Naive thymus-derived CD4-positive, alpha-beta T cell (primary cell): ENCODE measurements at regions of chr3 and their contacts with region 1.

Region 1: DNA sequence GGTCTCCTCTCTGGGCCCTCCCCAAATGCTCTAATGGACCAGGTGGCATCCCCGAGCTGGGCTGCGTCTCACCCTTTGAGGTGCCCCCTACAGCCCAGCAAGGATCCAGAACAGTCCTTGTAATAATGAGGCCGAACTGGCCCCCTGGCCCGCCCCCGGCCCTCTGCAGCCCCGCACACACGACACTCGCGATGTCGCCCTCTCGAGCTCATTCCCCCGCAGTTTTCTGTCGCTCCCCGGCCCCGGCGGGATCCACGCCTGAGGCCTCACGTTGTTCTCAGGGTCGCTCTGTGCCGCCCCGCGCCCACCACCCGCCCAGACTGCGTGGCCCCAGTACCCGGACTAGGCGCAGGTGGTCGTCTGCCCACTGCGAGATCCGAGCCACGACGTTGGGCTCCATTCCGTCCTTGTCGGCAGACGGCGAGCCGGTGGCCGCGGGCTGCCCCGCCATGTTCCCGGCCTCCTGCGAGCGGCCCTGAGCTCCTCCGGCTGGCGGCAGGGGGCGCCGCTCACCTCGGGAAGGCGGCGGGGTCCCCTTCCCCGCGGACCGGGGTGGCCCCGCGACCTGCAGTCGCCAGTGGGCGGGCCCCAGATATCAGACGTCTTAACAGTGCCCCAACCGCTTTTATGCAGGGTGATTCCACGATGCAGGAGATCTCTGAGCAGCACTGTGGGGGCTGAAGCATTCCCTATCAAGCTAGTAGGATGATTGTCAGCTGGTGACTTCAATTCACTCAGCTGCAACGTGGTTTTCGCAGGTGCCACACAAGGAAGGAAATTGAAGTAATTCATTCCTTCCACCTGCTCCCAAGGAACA is at the start of gene C3orf33:
- DNase-seq: peak; percentile 52 to 85 (median 78)
- ATAC-seq: peak; percentile 98
- H3K4me3 ChIP-seq: peak within 1 kb of the TSS; percentile 71
- H3K4me3 Mint-ChIP-seq: peak within 1 kb of the TSS; percentile 79 to 91 (median 90)
- H3K27ac ChIP-seq: peak within 1 kb of the TSS; percentile 79
- H3K27ac Mint-ChIP-seq: peak within 1 kb of the TSS; percentile 71 to 94 (median 82)
- H3K4me1 ChIP-seq: no peaks in the 10 kb centered on the region
- H3K4me1 Mint-ChIP-seq: peaks cover 8 to 28% (median 17%) of the 10 kb centered on the region in 7 donors
- H3K27me3 ChIP-seq: no peaks in the 10 kb centered on the region
- H3K27me3 Mint-ChIP-seq: peaks cover 6 to 15% (median 10%) of the 10 kb centered on the region in 5 donors
- total RNA-seq, gene C3orf33: 1.1 to 4.6 (median 2.7) TPM

Region 2: DNA sequence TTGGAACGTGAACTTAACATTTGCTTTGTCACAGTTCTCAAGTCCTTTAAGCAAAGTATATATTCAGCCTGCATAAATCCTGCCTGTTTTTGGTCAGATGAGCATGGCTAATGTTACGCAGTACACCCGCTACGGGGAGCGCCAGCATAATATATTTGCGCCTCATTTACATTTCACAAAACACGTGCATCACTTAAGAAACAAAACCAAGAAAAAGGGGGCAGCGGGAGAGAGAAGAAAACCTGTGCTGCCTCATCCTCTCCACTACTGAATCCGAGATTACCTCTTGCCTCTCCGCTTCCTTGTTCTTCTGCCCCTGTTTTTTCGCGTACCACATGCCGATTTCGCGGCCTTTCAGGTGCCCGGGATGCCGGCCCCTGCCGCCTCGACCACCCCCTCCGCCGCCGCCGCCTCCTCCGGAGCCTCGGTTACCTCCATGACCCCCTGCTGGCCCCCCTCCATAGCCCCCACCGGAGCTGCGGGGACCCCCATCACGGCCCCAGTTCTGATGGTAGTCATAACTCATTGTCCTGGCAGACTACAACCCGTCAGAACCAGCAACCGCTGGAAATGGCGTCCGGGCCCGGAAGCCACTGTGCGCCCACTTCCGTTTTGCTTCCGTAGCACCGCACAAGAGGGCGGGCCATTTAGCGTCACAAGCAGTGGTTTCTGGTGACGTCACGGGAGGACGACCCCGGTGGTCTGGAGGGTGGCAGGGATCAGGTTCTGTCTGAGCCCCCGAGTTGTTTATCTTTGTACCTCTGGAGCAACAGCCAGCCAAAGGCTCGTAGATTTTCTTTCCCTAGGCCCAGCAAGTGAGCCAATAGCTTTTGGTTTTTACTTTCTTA is 1481.9 kb before region 1 on chr3 and contains the start of gene DHX36:
- CTCF ChIA-PET with region 1: no interaction called
- POLR2A ChIA-PET with region 1: no interaction called
- intact Hi-C with region 1: loop called in 1 of 2 experiments (anchors 10 kb)
- DNase-seq: peak; percentile 73 to 92 (median 89)
- ATAC-seq: peak; percentile 94
- H3K4me3 ChIP-seq: peak within 1 kb of the TSS; percentile 70
- H3K4me3 Mint-ChIP-seq: peak within 1 kb of the TSS in 5 of 10 donors; percentile 92 to 96 (median 96)
- H3K27ac ChIP-seq: peak within 1 kb of the TSS; percentile 94
- H3K27ac Mint-ChIP-seq: peak within 1 kb of the TSS in 8 of 9 donors; percentile 96 to 100 (median 99)
- H3K4me1 ChIP-seq: peaks cover 38 to 43% of the 10 kb centered on the region in 2 donors
- H3K4me1 Mint-ChIP-seq: peaks cover 4 to 23% (median 20%) of the 10 kb centered on the region in 7 donors
- H3K27me3 ChIP-seq: no peaks in the 10 kb centered on the region
- H3K27me3 Mint-ChIP-seq: peaks cover 0 to under 1% (median 0%) of the 10 kb centered on the region in 5 donors
- total RNA-seq, gene DHX36: 73.4 to 101 (median 91.3) TPM

Region 3: DNA sequence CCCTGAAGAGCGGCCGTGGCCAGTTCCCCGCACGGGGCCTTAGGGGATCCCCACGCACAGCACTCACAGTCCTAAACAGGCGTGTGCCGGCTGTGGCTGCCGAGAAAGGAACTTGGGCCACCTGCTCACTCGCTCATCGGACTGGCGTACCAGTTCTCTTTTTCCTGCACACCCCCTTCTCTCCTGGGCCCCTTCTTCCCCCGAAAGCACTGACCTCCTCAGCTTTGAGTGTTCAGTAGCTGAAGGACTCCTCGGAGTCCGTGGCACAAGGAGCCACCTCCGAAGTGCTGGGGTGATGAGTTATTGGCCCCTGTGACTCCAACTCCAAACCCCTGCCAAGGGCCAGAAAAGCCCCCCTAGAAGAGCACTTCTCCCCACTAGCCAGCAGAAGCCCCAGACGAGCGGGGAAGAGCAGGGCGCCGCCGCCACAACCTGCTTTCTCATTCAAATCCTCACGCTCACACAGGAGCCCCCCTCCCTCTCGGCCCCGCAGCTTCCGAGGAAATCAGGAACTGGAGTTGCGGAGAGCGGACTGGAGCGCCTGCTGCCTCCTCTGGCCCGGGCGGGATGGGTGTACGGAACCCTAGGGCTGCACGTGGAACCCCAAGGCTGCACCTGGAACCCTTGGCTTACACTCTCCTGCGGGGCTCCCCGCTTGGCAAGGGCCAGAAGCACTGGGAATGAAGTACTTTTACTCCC is 61.2 kb before region 1 on chr3 and contains the start of gene PLCH1:
- CTCF ChIA-PET with region 1: no interaction called
- POLR2A ChIA-PET with region 1: no interaction called
- intact Hi-C with region 1: loop called in 1 of 2 experiments (anchors 5 kb)
- DNase-seq: peak; percentile 4 to 47 (median 30)
- ATAC-seq: peak; percentile 78
- H3K4me3 ChIP-seq: peak within 1 kb of the TSS; percentile 80
- H3K4me3 Mint-ChIP-seq: peak within 1 kb of the TSS; percentile 84 to 93 (median 92)
- H3K27ac ChIP-seq: peak within 1 kb of the TSS; percentile 37
- H3K27ac Mint-ChIP-seq: peak within 1 kb of the TSS in 8 of 9 donors; percentile 14 to 70 (median 50)
- H3K4me1 ChIP-seq: peaks cover 5 to 13% of the 10 kb centered on the region in 2 donors
- H3K4me1 Mint-ChIP-seq: peaks cover 12 to 27% (median 17%) of the 10 kb centered on the region in 7 donors
- H3K27me3 ChIP-seq: peaks cover 5 to 11% of the 10 kb centered on the region in 2 donors
- H3K27me3 Mint-ChIP-seq: peaks cover 35 to 80% (median 46%) of the 10 kb centered on the region in 5 donors
- total RNA-seq, gene PLCH1: 0.56 TPM in 1 of 5 experiments, not detected in the others

Region 4: GRCh38 chr3:155859859-155860258 is 53.8 kb after region 1 on chr3:
- CTCF ChIA-PET with region 1: interaction called, 13 read pairs
- POLR2A ChIA-PET with region 1: interaction called, 5 read pairs
- intact Hi-C with region 1: loop called in 1 of 2 experiments (anchors 1 kb)
- DNase-seq: peak in 2 of 9 donors; percentile 18
- ATAC-seq: peak; percentile 46
- H3K4me3 ChIP-seq: no peak overlapping the region
- H3K4me3 Mint-ChIP-seq: no peak overlapping the region
- H3K27ac ChIP-seq: no peak overlapping the region
- H3K27ac Mint-ChIP-seq: no peak overlapping the region
- H3K4me1 ChIP-seq: peaks cover 3% of the 10 kb centered on the region in 2 donors
- H3K4me1 Mint-ChIP-seq: peaks cover 2 to 36% (median 15%) of the 10 kb centered on the region in 7 donors
- H3K27me3 ChIP-seq: no peaks in the 10 kb centered on the region
- H3K27me3 Mint-ChIP-seq: peaks cover 0 to 3% (median 0%) of the 10 kb centered on the region in 5 donors

Region 5: DNA sequence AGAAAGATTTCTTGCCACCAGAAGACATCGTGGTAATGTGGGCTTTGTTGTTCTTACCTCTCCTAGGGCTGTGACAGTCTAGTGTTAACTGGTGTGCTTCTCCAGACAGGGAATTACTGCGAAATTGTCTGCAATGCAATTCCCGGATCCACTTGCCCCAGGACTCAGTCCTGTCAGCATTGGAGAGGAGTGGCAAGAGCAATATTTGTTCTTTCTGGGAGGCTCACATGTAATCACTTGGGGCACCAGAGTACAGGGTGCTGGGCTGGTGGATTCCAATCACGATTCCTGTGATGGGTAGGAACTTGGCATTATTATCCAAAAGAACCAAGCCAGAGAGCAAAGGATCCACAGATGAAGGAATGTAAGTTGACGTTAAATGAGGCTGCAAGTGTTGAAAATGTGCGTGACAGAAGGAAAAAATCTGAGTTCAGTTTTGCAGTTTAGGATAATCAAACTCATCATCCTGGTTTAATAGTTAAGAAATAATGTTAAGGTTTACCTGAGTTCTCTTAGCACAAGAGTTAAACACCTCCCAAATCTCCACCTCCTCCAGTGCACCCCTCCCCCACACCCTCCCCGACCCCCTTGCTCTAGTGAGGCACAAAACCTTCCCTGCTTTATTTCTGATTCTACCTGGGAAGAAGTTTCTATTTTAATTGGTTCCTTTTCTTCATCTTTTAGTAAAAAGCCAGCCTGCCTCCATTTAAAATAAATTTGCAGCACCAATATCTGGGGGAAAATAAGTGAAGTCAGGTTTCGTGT is 143.6 kb after region 1 on chr3:
- CTCF ChIA-PET with region 1: no interaction called
- POLR2A ChIA-PET with region 1: no interaction called
- intact Hi-C with region 1: loop called in 1 of 2 experiments (anchors 10 kb)
- DNase-seq: no peak
- ATAC-seq: no peak
- H3K4me3 ChIP-seq: no peak overlapping the region
- H3K4me3 Mint-ChIP-seq: no peak overlapping the region
- H3K27ac ChIP-seq: no peak overlapping the region
- H3K27ac Mint-ChIP-seq: peak overlapping the region in 1 of 9 donors; percentile 4
- H3K4me1 ChIP-seq: no peaks in the 10 kb centered on the region
- H3K4me1 Mint-ChIP-seq: no peaks in the 10 kb centered on the region
- H3K27me3 ChIP-seq: no peaks in the 10 kb centered on the region
- H3K27me3 Mint-ChIP-seq: no peaks in the 10 kb centered on the region

Region 6: GRCh38 chr3:155995525-155996351 is 189.7 kb after region 1 on chr3:
- CTCF ChIA-PET with region 1: no interaction called
- POLR2A ChIA-PET with region 1: no interaction called
- intact Hi-C with region 1: loop called in 1 of 2 experiments (anchors 5 kb)
- DNase-seq: peak in 1 of 9 donors; percentile 6
- ATAC-seq: no peak
- H3K4me3 ChIP-seq: no peak overlapping the region
- H3K4me3 Mint-ChIP-seq: no peak overlapping the region
- H3K27ac ChIP-seq: no peak overlapping the region
- H3K27ac Mint-ChIP-seq: no peak overlapping the region
- H3K4me1 ChIP-seq: no peaks in the 10 kb centered on the region
- H3K4me1 Mint-ChIP-seq: peaks cover 0 to 2% (median 0%) of the 10 kb centered on the region in 7 donors
- H3K27me3 ChIP-seq: no peaks in the 10 kb centered on the region
- H3K27me3 Mint-ChIP-seq: peaks cover 0 to 18% (median 6%) of the 10 kb centered on the region in 5 donors